Activated CD8-positive, alpha-beta memory T cell treated with anti-CD3 and anti-CD28 coated beads, Interleukin-2, amount 10 ng/mL, durations not matched to agents 7 days and 5 days (primary cell): ENCODE measurements at regions of chr12 and their contacts with region 1.

Region 1: DNA sequence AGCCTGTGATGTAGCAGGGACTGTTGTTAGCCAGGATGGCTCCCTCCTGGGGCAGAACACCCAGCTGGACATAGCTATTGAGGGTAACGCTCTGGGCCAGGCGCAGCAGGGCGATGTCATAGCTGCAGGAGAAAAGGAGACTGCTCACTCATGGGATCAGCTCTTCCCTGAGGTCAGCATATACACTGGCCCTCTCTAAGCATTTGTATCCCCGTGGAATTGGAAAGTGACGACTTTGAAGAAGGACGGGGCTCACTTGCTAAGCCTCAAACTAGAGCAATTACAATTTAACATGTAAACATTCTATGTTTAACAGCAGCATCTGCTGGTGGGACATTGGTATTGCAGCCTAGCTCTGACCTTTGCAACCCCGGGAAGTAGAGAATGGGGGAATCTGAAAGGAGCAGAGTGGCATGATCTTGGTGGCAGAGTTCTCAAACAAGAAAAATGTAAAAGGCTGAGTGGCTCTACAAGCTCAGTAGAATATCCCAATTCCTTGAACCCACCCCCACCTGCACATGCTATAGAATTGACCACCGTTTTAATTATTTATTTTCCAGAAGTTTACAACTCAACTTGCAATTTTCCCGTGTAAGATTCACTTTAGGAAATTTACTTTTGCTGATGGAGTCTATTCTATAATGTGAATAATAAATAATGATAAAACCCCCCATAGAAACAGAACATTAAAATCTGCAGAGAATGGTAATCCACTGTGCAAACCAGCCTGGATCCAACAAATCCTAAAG is 5.0 kb downstream of the CELA1 start:
- DNase-seq: peak; percentile 83
- ATAC-seq: peak; percentile 91
- H3K4me3 Mint-ChIP-seq: no peak overlapping the region
- H3K27ac Mint-ChIP-seq: peak overlapping the region; percentile 48
- H3K4me1 Mint-ChIP-seq: peaks cover 7% of the 10 kb centered on the region
- H3K27me3 Mint-ChIP-seq: no peaks in the 10 kb centered on the region

Region 2: GRCh38 chr12:51047655-51048540 is 293.5 kb before region 1 on chr12 and contains the start of gene LETMD1:
- CTCF ChIA-PET with region 1: interaction called, 10 read pairs
- DNase-seq: peak; percentile 96
- ATAC-seq: peak; percentile 98
- H3K4me3 Mint-ChIP-seq: peak within 1 kb of the TSS; percentile 98
- H3K27ac Mint-ChIP-seq: peak within 1 kb of the TSS; percentile 94
- H3K4me1 Mint-ChIP-seq: peaks cover 35% of the 10 kb centered on the region
- H3K27me3 Mint-ChIP-seq: no peaks in the 10 kb centered on the region
- total RNA-seq, gene LETMD1: 76.7 to 80.8 TPM

Region 3: GRCh38 chr12:51253276-51253675 is 88.2 kb before region 1 on chr12:
- CTCF ChIA-PET with region 1: interaction called, 14 read pairs
- DNase-seq: no peak
- ATAC-seq: no peak
- H3K4me3 Mint-ChIP-seq: no peak overlapping the region
- H3K27ac Mint-ChIP-seq: no peak overlapping the region
- H3K4me1 Mint-ChIP-seq: peaks cover 4% of the 10 kb centered on the region
- H3K27me3 Mint-ChIP-seq: no peaks in the 10 kb centered on the region

Region 4: GRCh38 chr12:51270067-51270970 is 71.1 kb before region 1 on chr12 and contains the start of gene SMAGP:
- CTCF ChIA-PET with region 1: interaction called, 81 read pairs
- DNase-seq: peak; percentile 68
- ATAC-seq: peak; percentile 71
- H3K4me3 Mint-ChIP-seq: peak within 1 kb of the TSS; percentile 82
- H3K27ac Mint-ChIP-seq: peak within 1 kb of the TSS; percentile 47
- H3K4me1 Mint-ChIP-seq: peaks cover 24% of the 10 kb centered on the region
- H3K27me3 Mint-ChIP-seq: peaks cover 31% of the 10 kb centered on the region
- total RNA-seq, gene SMAGP: 1.4 to 3.4 TPM

Region 5: GRCh38 chr12:51326762-51327439 is 14.5 kb before region 1 on chr12:
- CTCF ChIA-PET with region 1: interaction called, 49 read pairs
- DNase-seq: no peak
- ATAC-seq: peak; percentile 8
- H3K4me3 Mint-ChIP-seq: peak overlapping the region; percentile 29
- H3K27ac Mint-ChIP-seq: peak overlapping the region; percentile 96
- H3K4me1 Mint-ChIP-seq: peaks cover 65% of the 10 kb centered on the region
- H3K27me3 Mint-ChIP-seq: no peaks in the 10 kb centered on the region